Heart right ventricle (tissue), 16 donors: ENCODE measurements at regions of chr20 and their contacts with region 1.

Region 1: DNA sequence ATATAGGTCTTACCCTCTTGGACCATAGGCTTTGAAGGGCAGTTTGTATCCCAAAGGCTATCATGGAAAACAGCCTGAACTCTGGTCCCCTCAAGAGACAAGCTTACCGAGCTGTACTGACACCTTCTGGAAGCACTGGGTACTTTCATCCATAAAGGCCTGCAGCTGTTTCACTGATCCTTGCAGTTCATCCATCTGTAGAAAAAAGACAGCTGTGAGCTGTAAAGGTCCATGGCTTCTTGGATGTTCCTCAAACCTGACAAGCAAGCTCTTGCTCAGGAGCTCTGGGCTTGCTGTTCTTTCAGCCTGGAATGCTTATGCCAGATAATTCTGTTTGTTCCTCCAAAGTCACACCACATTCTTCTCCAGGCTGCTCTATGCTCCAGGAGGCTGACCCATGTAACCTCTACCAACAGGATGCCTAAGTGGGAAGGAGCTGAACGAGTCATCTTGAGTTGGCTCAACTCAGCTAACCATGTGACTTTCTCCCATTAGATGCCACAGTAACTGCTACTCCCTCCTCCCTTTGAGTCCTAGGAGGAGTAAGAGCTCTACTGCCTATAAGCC is 8.8 kb upstream of the NDRG3 start:
- DNase-seq: peak in 1 of 2 donors; percentile 68
- ATAC-seq: peak; percentile 69 to 89 (median 84)
- H3K4me3 ChIP-seq: no peak overlapping the region
- H3K27ac ChIP-seq: peak overlapping the region in 2 of 10 donors; percentile 20 to 44
- H3K4me1 ChIP-seq: peaks cover 0 to 33% (median 15%) of the 10 kb centered on the region in 9 donors
- H3K27me3 ChIP-seq: no peaks in the 10 kb centered on the region
- CTCF ChIP-seq: peak; percentile 64 to 87 (median 83)

Region 2: DNA sequence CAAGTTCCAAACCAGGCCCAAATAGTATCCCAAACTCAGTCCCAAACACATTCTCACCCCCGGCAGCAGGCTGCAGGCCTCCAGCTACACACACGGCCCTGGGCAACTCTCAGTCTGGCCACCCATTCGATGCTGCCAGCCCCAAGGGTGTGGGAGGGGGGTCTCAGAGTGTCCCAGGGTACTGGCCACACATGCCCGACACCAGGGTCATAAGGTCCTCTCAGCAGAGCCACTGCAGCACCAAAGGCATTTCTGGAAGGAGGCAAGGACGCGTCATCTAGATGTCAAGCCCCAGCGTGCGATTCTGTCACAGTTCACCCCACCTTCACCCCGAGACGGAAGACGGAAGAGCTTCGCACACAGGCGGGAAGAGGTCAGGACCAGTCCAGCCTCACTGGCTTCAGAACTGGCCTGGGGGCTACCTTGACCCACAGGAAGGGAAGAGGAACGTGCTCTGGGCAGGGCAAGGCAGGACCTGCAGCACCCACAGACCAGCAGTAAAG is 203.9 kb before region 1 on chr20:
- intact Hi-C with region 1: loop called in 2 of 10 experiments (anchors 5 to 10 kb)
- DNase-seq: no peak
- ATAC-seq: peak; percentile 35 to 54 (median 46)
- H3K4me3 ChIP-seq: no peak overlapping the region
- H3K27ac ChIP-seq: peak overlapping the region in 9 of 10 donors; percentile 14 to 71 (median 51)
- H3K4me1 ChIP-seq: peaks cover 0 to 52% (median 16%) of the 10 kb centered on the region in 9 donors
- H3K27me3 ChIP-seq: no peaks in the 10 kb centered on the region
- CTCF ChIP-seq: no peak

Region 3: DNA sequence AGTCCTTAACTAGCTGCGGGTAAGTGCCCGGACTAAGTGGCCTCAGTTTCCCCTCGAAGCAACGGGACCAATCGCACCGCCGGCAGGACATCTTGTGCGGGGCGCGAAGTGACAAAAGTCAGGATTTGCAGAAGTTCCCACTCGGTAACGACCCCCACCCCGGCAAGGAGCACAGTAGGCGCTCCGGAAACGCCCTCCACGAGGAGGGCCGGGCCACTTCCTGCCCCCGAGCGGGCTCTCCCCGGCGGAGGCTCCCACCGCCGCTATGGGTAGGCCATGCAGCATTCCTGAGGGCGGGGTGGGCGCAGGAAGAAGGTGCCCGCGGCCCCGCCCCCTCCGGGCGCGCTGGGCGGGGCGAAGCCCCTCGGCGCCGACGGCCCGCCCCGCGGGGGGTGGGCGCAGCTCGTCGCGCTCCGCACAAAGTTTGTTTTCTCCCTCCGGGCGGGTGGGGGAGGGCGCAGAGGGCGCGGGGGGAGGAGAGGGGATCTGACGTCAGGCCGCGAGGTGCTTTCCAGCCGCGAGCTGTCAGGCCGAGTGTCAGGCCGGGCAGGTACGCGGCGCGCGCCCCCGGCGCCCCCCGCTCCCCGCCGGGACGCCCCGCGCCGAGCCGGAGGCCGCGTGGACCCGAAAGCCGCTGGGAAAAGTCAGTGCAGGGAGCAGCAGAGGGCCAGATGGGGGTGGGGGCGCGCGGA is 181.5 kb before region 1 on chr20 and contains the start of gene TGIF2:
- intact Hi-C with region 1: loop called in 1 of 10 experiments (anchors 10 kb)
- DNase-seq: peak; percentile 84 to 85
- ATAC-seq: peak; percentile 86 to 90 (median 88)
- H3K4me3 ChIP-seq: peak within 1 kb of the TSS; percentile 66 to 89 (median 84)
- H3K27ac ChIP-seq: peak within 1 kb of the TSS; percentile 11 to 91 (median 88)
- H3K4me1 ChIP-seq: peaks cover 8 to 40% (median 24%) of the 10 kb centered on the region in 9 donors
- H3K27me3 ChIP-seq: no peaks in the 10 kb centered on the region
- CTCF ChIP-seq: no peak
- total RNA-seq, gene TGIF2: 5.2 to 13.8 (median 7.2) TPM

Region 4: DNA sequence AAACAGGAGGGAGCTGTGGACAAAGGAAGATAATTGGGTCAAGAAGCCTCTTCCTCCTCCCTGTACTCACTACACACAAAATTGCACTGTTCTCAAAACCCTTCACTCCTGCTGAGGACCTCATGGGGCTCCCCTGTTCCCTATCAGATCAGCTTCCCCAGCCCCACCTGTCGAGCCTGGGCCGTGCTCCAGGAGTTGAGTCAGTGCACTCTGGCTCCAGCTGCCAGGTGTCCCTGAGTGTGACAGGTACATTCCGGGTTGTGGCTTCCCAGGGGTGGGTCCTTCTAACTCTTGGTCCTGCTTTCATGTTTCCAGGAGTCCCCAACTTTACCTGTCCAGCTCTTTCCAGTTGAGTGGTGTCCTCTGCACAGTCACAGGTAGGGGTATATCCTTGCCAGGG is 140.8 kb before region 1 on chr20:
- intact Hi-C with region 1: loop called in 5 of 10 experiments (anchors 5 to 10 kb)
- DNase-seq: no peak
- ATAC-seq: no peak
- H3K4me3 ChIP-seq: no peak overlapping the region
- H3K27ac ChIP-seq: no peak overlapping the region
- H3K4me1 ChIP-seq: peaks cover 0 to 7% (median 0%) of the 10 kb centered on the region in 9 donors
- H3K27me3 ChIP-seq: no peaks in the 10 kb centered on the region
- CTCF ChIP-seq: no peak

Region 5: GRCh38 chr20:36717657-36718056 is 37.1 kb before region 1 on chr20:
- intact Hi-C with region 1: loop called in 6 of 10 experiments (anchors 2 to 5 kb)
- DNase-seq: no peak
- ATAC-seq: peak in 7 of 8 donors; percentile 45 to 75 (median 64)
- H3K4me3 ChIP-seq: no peak overlapping the region
- H3K27ac ChIP-seq: peak overlapping the region in 1 of 10 donors; percentile 23
- H3K4me1 ChIP-seq: peaks cover 0 to 32% (median 8%) of the 10 kb centered on the region in 9 donors
- H3K27me3 ChIP-seq: no peaks in the 10 kb centered on the region
- CTCF ChIP-seq: peak in 8 of 9 donors; percentile 5 to 59 (median 48)